Gastrocnemius medialis (tissue), 4 donors: ENCODE measurements at regions of chr1 and their contacts with region 1.

Region 1: DNA sequence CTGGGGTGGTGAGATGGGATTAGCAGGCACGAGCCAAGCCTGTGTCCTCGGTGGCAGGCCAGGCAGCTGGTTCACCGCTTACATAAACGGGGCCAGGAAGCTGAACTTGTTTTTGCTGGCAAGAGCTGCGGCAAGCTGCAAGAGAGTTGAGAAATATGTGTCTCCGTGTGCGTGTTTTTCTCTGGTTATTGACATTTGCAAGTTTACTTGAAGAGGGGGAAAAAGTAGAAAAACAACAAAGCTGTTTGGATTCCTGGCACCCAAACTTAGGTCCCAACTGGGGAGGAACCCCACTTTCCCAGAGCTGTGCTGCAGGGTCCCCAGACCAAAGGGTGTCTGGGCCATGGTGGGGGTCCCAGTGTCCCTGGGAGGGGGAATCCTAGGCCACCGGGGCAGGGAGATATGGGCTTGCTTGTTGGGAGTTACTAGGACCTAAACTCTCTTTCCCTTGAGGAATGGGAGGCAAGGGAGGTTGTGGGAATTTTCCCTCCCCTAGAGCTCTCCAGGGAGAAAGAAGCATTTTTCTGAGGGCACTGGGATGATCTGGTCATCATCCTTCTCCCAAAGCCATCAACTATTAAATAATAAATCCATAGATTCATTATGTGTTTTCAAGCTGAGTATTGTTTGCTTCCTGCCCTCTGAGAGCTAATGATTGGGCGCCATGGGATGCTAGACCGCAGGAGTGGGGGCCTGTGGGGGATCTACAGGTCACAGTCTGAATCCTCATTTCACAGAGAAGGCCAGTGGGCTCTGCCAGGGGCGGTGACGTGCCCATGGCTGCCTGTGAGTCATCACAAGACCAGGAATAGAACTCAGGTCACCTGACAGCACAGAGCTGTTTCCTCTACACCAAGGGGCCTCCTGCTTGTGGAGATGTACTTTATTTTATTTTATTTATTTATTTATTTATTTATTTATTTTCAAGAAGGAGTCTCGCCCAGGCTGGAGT is 14.8 kb downstream of the IL6R start:
- DNase-seq: peak; percentile 97 to 99
- ATAC-seq: peak; percentile 60 to 63
- H3K4me3 ChIP-seq: peak overlapping the region; percentile 34 to 49 (median 44)
- H3K27ac ChIP-seq: peak overlapping the region; percentile 99 to 100 (median 100)
- H3K4me1 ChIP-seq: peaks cover 97 to 99% of the 10 kb centered on the region in 2 donors
- H3K27me3 ChIP-seq: no peaks in the 10 kb centered on the region
- CTCF ChIP-seq: no peak
- POLR2A ChIP-seq: peak; percentile 48 to 58

Region 2: DNA sequence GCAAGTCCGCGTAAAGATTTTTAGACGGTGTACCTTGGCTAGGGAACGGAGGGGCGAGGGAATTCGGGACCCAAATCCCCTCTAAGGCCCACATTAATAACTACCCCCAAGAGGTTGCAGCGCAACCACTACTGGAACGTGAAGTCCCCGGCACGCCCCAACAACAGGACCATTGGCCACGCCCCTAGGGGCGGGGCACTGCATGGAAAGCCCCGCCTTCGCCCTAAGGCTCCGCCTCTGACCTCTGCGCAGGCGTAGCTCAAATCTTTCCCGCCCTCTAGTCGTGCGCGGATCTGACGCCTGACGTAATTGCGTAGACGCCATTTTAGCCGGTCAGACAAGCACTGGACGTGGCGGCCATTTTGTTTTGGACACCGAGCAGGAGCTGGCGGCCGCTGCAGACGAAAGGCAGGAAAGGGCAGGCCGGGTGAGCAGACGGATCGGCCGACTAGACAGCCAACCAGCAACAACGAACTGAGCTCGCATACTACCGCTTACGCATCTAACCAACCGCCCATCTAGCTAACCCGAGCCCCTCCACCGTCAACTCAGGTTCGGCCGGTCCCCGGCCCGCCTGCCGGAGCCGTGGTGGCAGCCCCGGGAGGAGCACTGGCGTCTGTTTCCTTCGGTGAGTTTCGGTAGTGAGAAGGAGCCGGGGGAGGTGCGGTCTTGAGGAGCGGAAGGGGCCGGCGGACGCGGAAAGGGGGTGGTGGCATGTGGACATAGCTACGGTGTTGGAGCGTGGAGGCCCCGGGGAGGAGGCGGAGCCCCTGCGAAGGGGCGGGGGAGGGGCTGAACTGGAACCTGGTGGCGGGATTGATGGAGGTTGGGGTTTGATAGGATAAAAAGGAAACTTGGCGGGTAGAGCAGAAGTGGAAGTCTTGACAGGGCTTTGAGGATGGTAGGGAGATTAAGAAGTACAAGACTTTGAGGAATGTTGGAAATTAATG is 785.9 kb before region 1 on chr1 and contains the start of gene CHTOP:
- in situ Hi-C with region 1: no loop called
- intact Hi-C with region 1: loop called (anchors 10 kb)
- DNase-seq: peak; percentile 98 to 99
- ATAC-seq: peak; percentile 77 to 88
- H3K4me3 ChIP-seq: peak within 1 kb of the TSS; percentile 68 to 99 (median 94)
- H3K27ac ChIP-seq: peak within 1 kb of the TSS; percentile 95 to 100 (median 100)
- H3K4me1 ChIP-seq: peaks cover 61 to 75% of the 10 kb centered on the region in 2 donors
- H3K27me3 ChIP-seq: no peaks in the 10 kb centered on the region
- CTCF ChIP-seq: peak in 1 of 5 experiments; percentile 24
- POLR2A ChIP-seq: peak; percentile 83 to 91
- total RNA-seq, gene CHTOP: 49.5 to 73.4 (median 59.1) TPM

Region 3: GRCh38 chr1:154062309-154062708 is 357.6 kb before region 1 on chr1:
- in situ Hi-C with region 1: no loop called
- intact Hi-C with region 1: no loop called
- DNase-seq: no peak
- ATAC-seq: no peak
- H3K4me3 ChIP-seq: no peak overlapping the region
- H3K27ac ChIP-seq: no peak overlapping the region
- H3K4me1 ChIP-seq: no peaks in the 10 kb centered on the region
- H3K27me3 ChIP-seq: no peaks in the 10 kb centered on the region
- CTCF ChIP-seq: no peak
- POLR2A ChIP-seq: no peak

Region 4: DNA sequence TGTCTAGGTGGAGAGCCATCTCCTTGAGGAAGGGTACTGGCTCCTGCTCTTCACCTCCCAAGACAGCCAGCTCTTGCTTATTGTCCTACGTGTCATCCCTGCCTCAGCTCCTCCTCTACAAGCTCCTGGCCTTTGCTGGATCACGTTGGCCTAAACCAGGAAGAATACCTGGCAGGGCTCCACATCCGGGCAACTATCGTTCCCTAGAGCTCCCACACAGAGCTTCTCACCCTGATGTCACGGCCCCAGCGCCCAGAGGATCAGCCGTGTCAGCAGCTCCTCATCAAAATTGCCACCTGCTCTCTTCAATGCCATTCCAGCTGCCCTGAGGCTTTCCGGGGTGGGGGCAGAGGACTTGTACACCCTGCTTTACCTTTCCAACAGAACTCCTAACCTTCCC is 226.1 kb before region 1 on chr1:
- in situ Hi-C with region 1: no loop called
- intact Hi-C with region 1: loop called (anchors 5 kb)
- DNase-seq: peak; percentile 59 to 93
- ATAC-seq: peak; percentile 13 to 31
- H3K4me3 ChIP-seq: no peak overlapping the region
- H3K27ac ChIP-seq: peak overlapping the region; percentile 86 to 93 (median 90)
- H3K4me1 ChIP-seq: peaks cover 21 to 26% of the 10 kb centered on the region in 2 donors
- H3K27me3 ChIP-seq: no peaks in the 10 kb centered on the region
- CTCF ChIP-seq: no peak
- POLR2A ChIP-seq: peak; percentile 33 to 35

Region 5: GRCh38 chr1:154431586-154432373 is 11.9 kb after region 1 on chr1:
- in situ Hi-C with region 1: no loop called
- intact Hi-C with region 1: loop called (anchors 1 kb)
- DNase-seq: peak; percentile 74 to 85
- ATAC-seq: peak; percentile 51 to 66
- H3K4me3 ChIP-seq: no peak overlapping the region
- H3K27ac ChIP-seq: peak overlapping the region; percentile 80 to 100 (median 91)
- H3K4me1 ChIP-seq: peaks cover 80 to 82% of the 10 kb centered on the region in 2 donors
- H3K27me3 ChIP-seq: no peaks in the 10 kb centered on the region
- CTCF ChIP-seq: no peak
- POLR2A ChIP-seq: peak in 1 of 2 donors; percentile 25